Vagina (tissue), 2 donors: ENCODE measurements at regions of chr11 and their contacts with region 1.

Region 1: DNA sequence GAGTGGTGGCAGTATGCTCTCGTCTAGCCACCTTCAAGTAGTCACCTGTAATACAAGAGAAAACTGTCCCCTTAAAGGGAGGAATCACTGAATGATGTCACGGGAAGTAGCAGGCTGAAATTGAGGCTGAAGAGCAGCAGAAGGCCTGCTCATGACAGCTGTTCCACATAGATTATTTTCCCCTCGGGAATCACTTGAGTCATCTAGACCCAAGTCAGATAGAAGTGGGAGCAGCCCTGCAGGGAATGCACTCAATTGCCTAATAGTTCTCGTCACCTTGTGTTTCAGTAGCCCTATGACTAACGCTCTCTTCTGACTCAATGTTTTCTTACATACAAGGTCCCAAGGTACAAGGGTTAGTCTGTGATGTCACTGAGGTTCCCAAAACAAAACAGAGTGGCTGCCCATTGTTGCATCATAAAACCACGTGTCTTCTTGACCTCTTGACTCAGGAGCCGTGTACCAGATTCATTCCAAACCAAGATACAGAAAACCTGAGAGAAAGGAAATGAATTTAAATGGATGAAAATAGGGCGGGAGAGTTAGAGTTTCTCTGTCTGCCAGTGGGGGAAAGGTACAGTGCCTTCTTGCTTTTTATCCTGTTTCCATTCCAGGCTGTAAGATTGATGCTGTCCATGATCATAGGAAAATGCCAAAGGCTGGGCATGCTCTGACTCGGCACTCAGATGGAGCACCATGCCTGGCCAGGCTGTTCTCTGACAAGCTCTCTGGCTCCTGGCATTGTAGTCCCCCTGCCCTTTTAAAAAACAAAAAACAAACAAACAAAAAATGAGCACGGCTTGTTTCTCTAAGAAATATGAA is 21.6 kb upstream of the C11orf96 start:
- DNase-seq: peak in 1 of 2 donors; percentile 99
- H3K4me3 ChIP-seq: no peak overlapping the region
- H3K27ac ChIP-seq: peak overlapping the region; percentile 85
- H3K4me1 ChIP-seq: peaks cover 47% of the 10 kb centered on the region
- H3K27me3 ChIP-seq: no peaks in the 10 kb centered on the region
- CTCF ChIP-seq: no peak
- POLR2A ChIP-seq: no peak

Region 2: DNA sequence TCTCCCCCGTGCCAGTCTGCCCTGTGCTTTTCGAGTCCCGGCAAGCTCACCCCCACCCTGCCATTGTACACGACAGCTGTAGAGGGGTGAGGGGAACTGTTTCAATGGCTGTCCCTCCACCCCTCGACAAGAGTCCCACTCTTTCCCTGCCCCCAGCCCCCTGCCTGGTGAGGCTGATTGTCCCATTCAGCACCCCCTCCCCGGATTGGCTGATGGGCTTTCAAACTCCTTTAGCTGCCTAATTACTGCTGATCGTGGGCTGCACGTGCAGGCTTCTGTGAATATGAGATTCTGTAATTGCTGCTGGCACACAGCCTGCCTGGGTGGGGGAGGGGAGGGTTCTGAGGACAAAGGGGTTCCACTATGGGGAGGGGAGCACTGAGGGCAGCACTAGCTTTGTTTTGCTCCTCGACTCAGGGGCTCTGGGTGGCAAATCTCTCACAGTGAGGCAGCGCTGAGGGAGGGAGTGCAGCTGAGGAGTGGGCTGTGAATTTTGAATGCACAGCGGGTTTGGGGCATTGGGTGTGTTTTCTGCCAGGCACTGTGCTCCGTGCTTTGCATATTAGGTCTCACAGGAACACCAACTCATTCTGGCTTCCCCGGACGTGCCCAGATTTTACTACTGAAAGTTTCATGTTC is 84.4 kb after region 1 on chr11:
- intact Hi-C with region 1: loop called (anchors 5 kb)
- DNase-seq: peak; percentile 62 to 87
- H3K4me3 ChIP-seq: no peak overlapping the region
- H3K27ac ChIP-seq: no peak overlapping the region
- H3K4me1 ChIP-seq: no peaks in the 10 kb centered on the region
- H3K27me3 ChIP-seq: no peaks in the 10 kb centered on the region
- CTCF ChIP-seq: no peak
- POLR2A ChIP-seq: no peak